T-cell (primary cell): ENCODE measurements at regions of chr13 and their contacts with region 1.

Region 1: GRCh38 chr13:31044377-31045285 is 112.2 kb downstream of the TEX26 start:
- DNase-seq: peak; percentile 54 to 88 (median 72)
- ATAC-seq: peak; percentile 73 to 92 (median 80)
- H3K4me3 ChIP-seq: no peak overlapping the region
- H3K4me3 Mint-ChIP-seq: peak overlapping the region in 1 of 3 donors; percentile 35
- H3K27ac ChIP-seq: peak overlapping the region; percentile 50
- H3K27ac Mint-ChIP-seq: peak overlapping the region; percentile 77 to 88
- H3K4me1 ChIP-seq: peaks cover 18 to 39% of the 10 kb centered on the region in 2 experiments
- H3K4me1 Mint-ChIP-seq: peaks cover 22 to 41% (median 34%) of the 10 kb centered on the region in 3 donors
- H3K27me3 ChIP-seq: peaks cover 2 to 19% of the 10 kb centered on the region in 2 experiments
- H3K27me3 Mint-ChIP-seq: peaks cover 3 to 12% of the 10 kb centered on the region in 2 donors

Region 2: DNA sequence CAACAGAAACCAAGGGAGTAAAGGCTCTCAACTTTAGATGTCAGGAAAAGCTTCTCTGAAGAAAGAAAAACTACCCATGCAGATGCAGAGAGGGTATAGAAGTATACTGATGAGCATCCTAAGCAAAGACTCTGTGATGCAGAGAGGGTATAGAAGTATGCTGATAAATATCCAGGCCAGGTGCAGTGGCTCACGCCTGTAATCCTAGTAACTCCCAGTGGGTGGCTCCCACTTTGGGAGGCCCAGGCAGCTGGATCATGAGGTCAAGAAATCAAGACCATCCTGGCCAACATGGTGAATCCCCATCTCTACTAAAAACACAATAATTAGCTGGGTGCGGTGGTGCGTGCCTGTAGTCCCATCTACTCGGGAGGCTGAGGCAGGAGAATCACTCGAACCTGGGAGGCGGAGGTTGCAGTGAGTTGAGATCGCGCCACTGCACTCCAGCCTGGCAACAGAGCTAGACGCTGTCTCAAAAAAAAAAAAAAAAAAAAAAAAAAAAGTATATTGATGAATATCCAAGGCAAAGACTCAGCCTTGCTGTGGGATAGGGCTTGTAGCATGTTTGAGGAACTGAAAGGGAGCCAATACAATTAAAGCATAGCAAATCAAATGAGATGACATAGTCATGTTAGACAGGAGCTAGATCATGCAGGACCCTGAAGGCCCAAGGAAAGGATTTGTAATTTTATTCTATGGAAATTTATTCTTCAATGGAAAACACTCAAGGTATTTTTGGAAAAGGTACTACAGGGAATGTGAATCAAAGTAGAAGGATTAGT is 1209.2 kb before region 1 on chr13:
- CTCF ChIA-PET with region 1: no interaction called
- POLR2A ChIA-PET with region 1: no interaction called
- DNase-seq: no peak
- ATAC-seq: no peak
- H3K4me3 ChIP-seq: no peak overlapping the region
- H3K4me3 Mint-ChIP-seq: no peak overlapping the region
- H3K27ac ChIP-seq: no peak overlapping the region
- H3K27ac Mint-ChIP-seq: no peak overlapping the region
- H3K4me1 ChIP-seq: peaks cover 0 to 3% of the 10 kb centered on the region in 2 experiments
- H3K4me1 Mint-ChIP-seq: peaks cover 68 to 75% (median 70%) of the 10 kb centered on the region in 3 donors
- H3K27me3 ChIP-seq: no peaks in the 10 kb centered on the region
- H3K27me3 Mint-ChIP-seq: no peaks in the 10 kb centered on the region

Region 3: GRCh38 chr13:30353471-30354215 is 691.0 kb before region 1 on chr13:
- CTCF ChIA-PET with region 1: interaction called in 1 of 2 experiments, 10 read pairs
- POLR2A ChIA-PET with region 1: no interaction called
- DNase-seq: no peak
- ATAC-seq: no peak
- H3K4me3 ChIP-seq: no peak overlapping the region
- H3K4me3 Mint-ChIP-seq: peak overlapping the region in 1 of 3 donors; percentile 1
- H3K27ac ChIP-seq: no peak overlapping the region
- H3K27ac Mint-ChIP-seq: no peak overlapping the region
- H3K4me1 ChIP-seq: peaks cover 9 to 18% of the 10 kb centered on the region in 2 experiments
- H3K4me1 Mint-ChIP-seq: peaks cover 22 to 33% (median 25%) of the 10 kb centered on the region in 3 donors
- H3K27me3 ChIP-seq: no peaks in the 10 kb centered on the region
- H3K27me3 Mint-ChIP-seq: no peaks in the 10 kb centered on the region

Region 4: GRCh38 chr13:30787738-30788525 is 256.7 kb before region 1 on chr13:
- CTCF ChIA-PET with region 1: no interaction called
- POLR2A ChIA-PET with region 1: no interaction called
- DNase-seq: no peak
- ATAC-seq: no peak
- H3K4me3 ChIP-seq: no peak overlapping the region
- H3K4me3 Mint-ChIP-seq: no peak overlapping the region
- H3K27ac ChIP-seq: no peak overlapping the region
- H3K27ac Mint-ChIP-seq: no peak overlapping the region
- H3K4me1 ChIP-seq: no peaks in the 10 kb centered on the region
- H3K4me1 Mint-ChIP-seq: no peaks in the 10 kb centered on the region
- H3K27me3 ChIP-seq: peaks cover 0 to 3% of the 10 kb centered on the region in 2 experiments
- H3K27me3 Mint-ChIP-seq: no peaks in the 10 kb centered on the region